ENCODE measurements at regions of chr2 and their contacts with region 1.

Region 1: DNA sequence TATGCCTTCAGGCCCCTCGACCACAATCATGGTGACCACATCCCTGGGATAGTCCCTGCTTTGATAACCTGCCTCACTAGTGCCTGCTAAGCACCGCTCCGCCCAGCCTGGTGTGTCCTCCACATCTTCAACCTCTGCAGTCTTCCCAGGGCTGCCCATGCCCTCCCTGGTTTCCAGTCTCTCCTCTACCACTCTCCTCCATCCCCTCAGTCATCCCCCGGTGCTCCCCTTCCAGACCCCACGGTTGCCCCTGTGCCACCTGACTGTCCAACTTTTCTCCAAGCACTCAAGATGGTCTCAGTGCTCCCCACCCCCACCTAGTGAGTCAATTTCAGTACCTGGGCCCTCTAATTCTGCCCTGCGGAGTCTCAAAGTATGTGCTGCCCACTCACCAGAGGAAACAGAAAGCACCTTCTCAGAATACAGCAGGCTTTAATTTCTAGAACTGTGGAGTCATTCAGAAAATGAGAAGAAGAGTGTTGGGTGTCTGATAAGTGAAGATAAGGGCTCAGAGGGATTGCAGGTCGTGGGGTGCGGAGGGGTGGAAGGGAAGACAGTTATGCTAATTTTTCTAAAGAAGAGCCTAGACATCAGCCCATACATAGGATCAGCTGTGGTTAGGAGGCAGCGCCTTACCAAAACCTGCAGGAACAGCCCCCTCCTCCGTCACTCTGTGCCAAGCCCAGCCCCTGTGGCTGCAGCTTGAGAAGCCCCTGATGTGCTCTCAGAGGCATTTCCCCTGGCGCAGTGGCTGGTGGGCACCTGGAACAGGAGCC is 53.6 kb upstream of the CAB39 start:
- DNase-seq: peak; percentile 90
- H3K4me3 Mint-ChIP-seq: peak overlapping the region; percentile 88
- H3K27ac Mint-ChIP-seq: peak overlapping the region; percentile 99
- H3K4me1 Mint-ChIP-seq: peaks cover 88% of the 10 kb centered on the region
- H3K27me3 Mint-ChIP-seq: no peaks in the 10 kb centered on the region

Region 2: DNA sequence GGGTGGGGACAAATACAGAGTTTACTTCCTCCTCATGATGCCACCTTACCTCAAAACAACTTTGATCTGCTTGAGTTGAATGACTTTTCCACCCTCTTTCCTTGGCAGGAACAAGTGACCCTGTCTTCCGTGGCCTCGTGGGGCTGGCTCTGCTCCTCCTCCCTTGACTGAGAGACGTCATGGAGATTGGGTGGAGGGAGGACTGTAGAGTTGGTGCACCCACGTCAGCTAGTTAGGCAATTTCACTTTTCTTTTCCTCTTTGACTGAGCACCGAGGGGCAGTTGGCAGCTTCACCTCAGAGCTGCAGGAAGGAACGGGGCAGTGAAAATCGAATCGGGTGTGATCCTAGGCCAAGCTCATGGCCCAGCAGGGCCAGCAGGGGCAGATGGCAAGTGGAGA is 433.6 kb before region 1 on chr2 and contains the start of gene SP140:
- CTCF ChIA-PET with region 1: no interaction called
- POLR2A ChIA-PET with region 1: no interaction called
- intact Hi-C with region 1: loop called (anchors 2 kb)
- DNase-seq: peak; percentile 92
- H3K4me3 Mint-ChIP-seq: peak within 1 kb of the TSS; percentile 89
- H3K27ac Mint-ChIP-seq: peak within 1 kb of the TSS; percentile 97
- H3K4me1 Mint-ChIP-seq: peaks cover 58% of the 10 kb centered on the region
- H3K27me3 Mint-ChIP-seq: no peaks in the 10 kb centered on the region
- total RNA-seq, gene SP140: 150 to 151 TPM

Region 3: DNA sequence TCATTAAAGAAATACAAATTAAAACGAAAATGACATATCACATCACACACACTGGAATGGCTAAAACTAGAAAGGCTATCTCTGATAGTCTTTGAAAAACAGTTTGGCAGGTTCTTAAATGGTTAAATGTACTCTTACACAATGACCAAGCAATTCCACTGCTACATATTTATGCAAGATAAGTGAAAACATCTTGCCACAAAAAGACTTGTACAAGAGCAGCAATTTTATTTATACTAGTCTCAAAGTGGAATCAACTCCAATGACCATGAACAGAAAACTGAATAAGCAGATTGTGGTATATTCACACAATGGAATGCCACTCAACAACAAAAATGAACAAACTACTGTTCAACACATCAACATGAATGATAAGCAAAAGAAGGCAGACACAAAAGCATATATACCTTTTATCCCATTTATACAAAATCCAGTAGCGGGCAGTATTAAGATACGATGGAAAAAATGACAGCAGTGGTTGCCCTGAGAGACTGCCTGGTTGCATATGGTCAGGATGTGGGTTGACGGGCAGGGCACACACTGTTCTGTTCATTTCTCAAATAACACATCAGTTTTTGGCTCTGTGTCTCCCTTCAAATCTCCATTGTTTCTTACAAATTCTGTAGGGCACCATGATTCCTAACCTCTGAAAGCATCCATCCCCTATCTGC is 217.7 kb before region 1 on chr2:
- CTCF ChIA-PET with region 1: no interaction called
- POLR2A ChIA-PET with region 1: no interaction called
- intact Hi-C with region 1: loop called (anchors 2 kb)
- DNase-seq: peak; percentile 71
- H3K4me3 Mint-ChIP-seq: peak overlapping the region; percentile 3
- H3K27ac Mint-ChIP-seq: peak overlapping the region; percentile 77
- H3K4me1 Mint-ChIP-seq: peaks cover 52% of the 10 kb centered on the region
- H3K27me3 Mint-ChIP-seq: no peaks in the 10 kb centered on the region

Region 4: DNA sequence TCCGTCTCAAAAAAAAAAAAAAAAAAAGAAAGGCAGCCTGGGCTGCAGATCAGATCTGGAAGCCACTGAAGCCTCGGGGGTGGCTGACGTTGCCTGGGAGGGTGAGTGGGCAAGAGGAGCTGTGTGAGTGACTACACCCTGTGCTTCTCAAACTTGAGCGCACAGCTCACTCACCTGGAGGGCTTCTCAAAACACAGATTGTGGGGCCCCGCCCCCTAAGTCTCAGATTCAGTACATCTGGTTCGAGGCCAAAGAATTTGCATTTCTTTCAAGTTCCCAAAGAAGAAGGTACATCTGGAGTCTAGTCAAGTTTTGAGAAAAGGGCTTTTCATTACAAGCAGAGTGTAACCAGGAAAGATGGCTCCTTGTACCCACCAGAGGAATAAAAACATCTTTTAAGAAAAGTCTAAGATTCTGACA is 44.1 kb before region 1 on chr2:
- CTCF ChIA-PET with region 1: no interaction called
- POLR2A ChIA-PET with region 1: interaction called, 3 read pairs
- intact Hi-C with region 1: loop called (anchors 1 kb)
- DNase-seq: peak; percentile 78
- H3K4me3 Mint-ChIP-seq: no peak overlapping the region
- H3K27ac Mint-ChIP-seq: peak overlapping the region; percentile 56
- H3K4me1 Mint-ChIP-seq: peaks cover 22% of the 10 kb centered on the region
- H3K27me3 Mint-ChIP-seq: no peaks in the 10 kb centered on the region

Region 5: GRCh38 chr2:230781130-230781797 is 122.2 kb after region 1 on chr2:
- CTCF ChIA-PET with region 1: no interaction called
- POLR2A ChIA-PET with region 1: no interaction called
- intact Hi-C with region 1: loop called (anchors 1 kb)
- DNase-seq: peak; percentile 74
- H3K4me3 Mint-ChIP-seq: peak overlapping the region; percentile 2
- H3K27ac Mint-ChIP-seq: peak overlapping the region; percentile 84
- H3K4me1 Mint-ChIP-seq: peaks cover 80% of the 10 kb centered on the region
- H3K27me3 Mint-ChIP-seq: no peaks in the 10 kb centered on the region

Region 6: GRCh38 chr2:230913406-230914143 is 254.5 kb after region 1 on chr2:
- CTCF ChIA-PET with region 1: no interaction called
- POLR2A ChIA-PET with region 1: no interaction called
- intact Hi-C with region 1: loop called (anchors 5 kb)
- DNase-seq: peak; percentile 41
- H3K4me3 Mint-ChIP-seq: no peak overlapping the region
- H3K27ac Mint-ChIP-seq: no peak overlapping the region
- H3K4me1 Mint-ChIP-seq: peaks cover 48% of the 10 kb centered on the region
- H3K27me3 Mint-ChIP-seq: peaks cover 22% of the 10 kb centered on the region